CD14-positive monocyte (primary cell): ENCODE measurements at regions of chr17 and their contacts with region 1.

Region 1: DNA sequence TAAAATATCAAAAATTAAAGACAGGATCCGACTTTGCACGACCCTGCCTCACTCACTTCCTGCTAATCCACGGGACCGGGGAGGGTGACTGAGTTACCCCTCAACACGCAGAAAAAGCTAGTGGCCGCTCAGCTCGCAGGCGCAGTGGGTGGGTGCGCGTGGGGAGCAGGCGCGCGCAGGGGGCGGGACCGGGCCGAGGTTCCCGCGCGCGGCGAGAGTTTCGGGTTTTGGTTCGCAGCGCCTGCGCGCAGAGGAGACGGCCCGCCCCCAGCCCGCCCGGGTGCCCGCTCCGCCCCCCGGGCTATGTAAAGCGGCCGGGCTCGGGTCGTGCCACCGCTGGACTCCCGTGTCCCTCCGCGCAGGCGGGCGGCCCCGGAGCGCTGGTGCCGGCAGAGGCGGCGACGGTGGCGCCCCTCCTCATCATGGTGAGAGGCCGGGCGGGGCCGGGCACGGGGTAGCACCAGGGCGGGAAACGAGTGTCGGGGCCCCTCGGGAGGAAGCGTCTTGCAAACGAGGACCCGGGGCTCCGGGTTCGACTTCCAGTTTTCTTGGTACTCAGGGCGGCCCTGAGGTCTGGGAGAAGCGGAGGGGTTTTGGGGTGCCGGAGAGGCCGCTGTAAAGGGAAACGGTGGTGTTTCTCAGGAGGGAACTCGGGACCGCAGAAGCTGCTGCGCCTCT is at the start of gene CNP:
- DNase-seq: peak; percentile 87 to 91 (median 89)
- H3K4me3 ChIP-seq: peak within 1 kb of the TSS; percentile 67 to 93 (median 92)
- H3K4me3 Mint-ChIP-seq: peak within 1 kb of the TSS; percentile 79 to 91
- H3K27ac ChIP-seq: peak within 1 kb of the TSS; percentile 60 to 83
- H3K27ac Mint-ChIP-seq: peak within 1 kb of the TSS; percentile 62 to 85 (median 79)
- H3K4me1 ChIP-seq: peaks cover 19 to 40% of the 10 kb centered on the region in 2 donors
- H3K4me1 Mint-ChIP-seq: peaks cover 47% of the 10 kb centered on the region
- H3K27me3 ChIP-seq: no peaks in the 10 kb centered on the region
- H3K27me3 Mint-ChIP-seq: peaks cover 0 to 2% (median 0%) of the 10 kb centered on the region in 3 donors
- CTCF ChIP-seq: no peak
- polyA plus RNA-seq, gene CNP: 19.0 to 50.2 (median 47.0) TPM

Region 2: DNA sequence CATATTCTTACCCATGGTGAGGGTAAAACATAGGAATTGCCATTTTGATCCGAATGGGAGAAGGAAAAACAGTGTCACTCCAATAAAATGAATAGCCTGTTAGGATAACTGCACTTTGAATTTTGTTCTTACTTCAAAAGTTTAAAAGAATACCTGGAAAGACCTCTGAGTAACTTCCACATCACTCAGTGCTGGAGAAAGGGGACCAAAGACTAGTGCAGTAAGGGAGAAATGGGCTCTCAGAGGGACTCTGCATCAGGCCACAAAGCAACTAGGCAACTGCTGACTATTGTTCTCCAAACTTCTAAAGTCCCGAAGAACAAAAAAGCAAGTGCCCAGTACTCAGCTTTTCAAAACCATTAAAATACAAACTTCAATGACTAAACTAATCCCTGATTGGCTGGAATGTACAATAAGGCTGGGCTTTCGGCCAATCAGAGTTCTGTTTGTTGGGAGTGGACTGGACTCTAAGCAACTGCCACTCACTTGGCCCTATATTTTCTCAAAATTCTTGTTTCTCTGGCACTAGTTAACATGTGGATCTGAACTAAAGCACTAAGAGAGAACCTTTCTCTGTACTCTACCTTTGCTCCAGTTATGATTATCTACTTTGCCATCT is 44.4 kb after region 1 on chr17:
- intact Hi-C with region 1: loop called in 1 of 2 experiments (anchors 5 kb)
- DNase-seq: peak; percentile 30 to 59 (median 58)
- H3K4me3 ChIP-seq: peak overlapping the region in 1 of 3 experiments; percentile 63
- H3K4me3 Mint-ChIP-seq: peak overlapping the region in 1 of 2 donors; percentile 73
- H3K27ac ChIP-seq: peak overlapping the region; percentile 24 to 79
- H3K27ac Mint-ChIP-seq: peak overlapping the region; percentile 82 to 94 (median 93)
- H3K4me1 ChIP-seq: peaks cover 55 to 74% of the 10 kb centered on the region in 2 donors
- H3K4me1 Mint-ChIP-seq: peaks cover 70% of the 10 kb centered on the region
- H3K27me3 ChIP-seq: no peaks in the 10 kb centered on the region
- H3K27me3 Mint-ChIP-seq: no peaks in the 10 kb centered on the region
- CTCF ChIP-seq: no peak

Region 3: GRCh38 chr17:42153919-42154742 is 187.5 kb after region 1 on chr17:
- intact Hi-C with region 1: loop called in 1 of 2 experiments (anchors 2 kb)
- DNase-seq: peak; percentile 48 to 76 (median 69)
- H3K4me3 ChIP-seq: peak overlapping the region; percentile 84 to 89 (median 88)
- H3K4me3 Mint-ChIP-seq: peak overlapping the region; percentile 93 to 97
- H3K27ac ChIP-seq: peak overlapping the region; percentile 78 to 87
- H3K27ac Mint-ChIP-seq: peak overlapping the region; percentile 88 to 97 (median 93)
- H3K4me1 ChIP-seq: peaks cover 19 to 34% of the 10 kb centered on the region in 2 donors
- H3K4me1 Mint-ChIP-seq: peaks cover 36% of the 10 kb centered on the region
- H3K27me3 ChIP-seq: no peaks in the 10 kb centered on the region
- H3K27me3 Mint-ChIP-seq: peaks cover 0 to 2% (median 0%) of the 10 kb centered on the region in 3 donors
- CTCF ChIP-seq: no peak